Activated CD4-positive, alpha-beta memory T cell treated with anti-CD3 and anti-CD28 coated beads for 36 hours (primary cell): ENCODE measurements at regions of chr9 and their contacts with region 1.

Region 1: GRCh38 chr9:27333241-27334052 is 36.5 kb upstream of the EQTN start:
- DNase-seq: peak; percentile 53
- H3K4me3 Mint-ChIP-seq: no peak overlapping the region
- H3K27ac Mint-ChIP-seq: no peak overlapping the region
- H3K4me1 Mint-ChIP-seq: peaks cover 3% of the 10 kb centered on the region
- H3K27me3 Mint-ChIP-seq: peaks cover 2% of the 10 kb centered on the region

Region 2: DNA sequence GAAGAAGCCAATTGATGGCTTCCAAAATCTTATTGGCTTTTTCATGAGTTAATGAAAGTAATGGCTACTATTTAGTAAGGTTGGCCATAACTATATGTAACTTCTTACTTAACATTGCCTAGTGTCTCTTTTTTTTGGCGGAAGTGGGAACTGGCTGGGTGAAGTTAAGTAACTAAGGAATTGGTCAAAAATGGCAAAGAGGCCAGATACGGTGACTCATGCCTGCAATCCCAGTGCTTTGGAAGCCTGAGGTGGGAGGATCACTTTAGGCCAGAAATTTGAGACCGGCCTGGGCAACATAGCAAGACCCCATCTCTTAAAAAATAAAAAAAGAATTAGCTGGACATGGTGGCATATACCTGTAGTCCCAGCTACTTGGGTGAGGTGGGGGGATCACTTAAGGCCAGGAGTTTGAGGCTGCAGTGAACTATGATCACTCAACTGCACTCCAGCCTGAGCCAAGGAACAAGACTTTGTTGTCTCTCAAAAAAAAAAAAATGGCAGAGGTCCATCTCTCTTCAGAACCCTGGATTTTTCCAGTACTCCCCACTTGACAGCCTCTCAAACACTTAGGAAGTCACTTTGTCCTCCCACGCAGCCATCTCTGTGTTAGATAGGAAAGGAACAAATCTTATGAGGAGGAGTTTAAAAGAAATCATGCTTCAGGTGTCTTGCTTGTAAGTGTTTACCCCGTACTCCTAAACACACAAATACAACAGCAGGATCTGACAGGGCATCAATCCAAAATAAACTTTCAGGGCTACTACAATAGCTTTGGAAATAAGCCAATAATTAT is 148.7 kb before region 1 on chr9:
- CTCF ChIA-PET with region 1: no interaction called
- POLR2A ChIA-PET with region 1: no interaction called
- intact Hi-C with region 1: no loop called
- DNase-seq: no peak
- H3K4me3 Mint-ChIP-seq: no peak overlapping the region
- H3K27ac Mint-ChIP-seq: no peak overlapping the region
- H3K4me1 Mint-ChIP-seq: no peaks in the 10 kb centered on the region
- H3K27me3 Mint-ChIP-seq: peaks cover 3% of the 10 kb centered on the region

Region 3: DNA sequence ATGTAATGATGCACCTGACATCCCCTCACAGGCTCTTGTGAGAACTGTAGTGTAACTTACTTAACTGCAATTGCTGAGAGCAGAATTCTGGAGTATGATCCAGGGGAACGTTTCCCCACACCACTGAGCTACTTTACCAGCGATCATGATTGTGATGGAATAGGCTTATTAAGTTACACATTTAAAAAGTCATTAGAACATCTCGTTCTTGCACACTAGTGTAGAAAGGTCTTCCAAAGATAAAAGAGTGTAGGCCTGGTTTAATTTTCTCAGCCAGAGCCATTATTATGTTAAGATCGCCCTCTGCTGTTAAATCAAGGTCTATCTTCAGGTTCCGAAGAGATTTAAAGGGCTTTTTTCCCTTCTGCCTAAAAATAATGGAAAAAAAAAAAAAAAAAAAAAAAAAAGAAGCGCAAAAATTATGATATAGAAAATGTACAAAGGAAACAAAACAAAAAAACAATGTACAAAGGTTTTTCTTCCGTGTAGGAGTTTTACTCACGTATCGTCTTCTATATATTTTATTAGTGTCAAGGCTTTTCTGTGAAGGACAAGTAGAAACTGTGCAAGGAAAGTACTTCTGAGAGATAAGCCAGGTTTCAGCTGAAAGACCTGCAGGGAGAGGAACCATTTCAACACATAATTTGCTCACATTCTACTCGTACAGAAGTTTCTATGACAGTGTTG is 214.8 kb after region 1 on chr9:
- CTCF ChIA-PET with region 1: interaction called, 14 read pairs
- POLR2A ChIA-PET with region 1: no interaction called
- intact Hi-C with region 1: loop called (anchors 1 kb)
- DNase-seq: no peak
- H3K4me3 Mint-ChIP-seq: no peak overlapping the region
- H3K27ac Mint-ChIP-seq: no peak overlapping the region
- H3K4me1 Mint-ChIP-seq: no peaks in the 10 kb centered on the region
- H3K27me3 Mint-ChIP-seq: no peaks in the 10 kb centered on the region

Region 4: DNA sequence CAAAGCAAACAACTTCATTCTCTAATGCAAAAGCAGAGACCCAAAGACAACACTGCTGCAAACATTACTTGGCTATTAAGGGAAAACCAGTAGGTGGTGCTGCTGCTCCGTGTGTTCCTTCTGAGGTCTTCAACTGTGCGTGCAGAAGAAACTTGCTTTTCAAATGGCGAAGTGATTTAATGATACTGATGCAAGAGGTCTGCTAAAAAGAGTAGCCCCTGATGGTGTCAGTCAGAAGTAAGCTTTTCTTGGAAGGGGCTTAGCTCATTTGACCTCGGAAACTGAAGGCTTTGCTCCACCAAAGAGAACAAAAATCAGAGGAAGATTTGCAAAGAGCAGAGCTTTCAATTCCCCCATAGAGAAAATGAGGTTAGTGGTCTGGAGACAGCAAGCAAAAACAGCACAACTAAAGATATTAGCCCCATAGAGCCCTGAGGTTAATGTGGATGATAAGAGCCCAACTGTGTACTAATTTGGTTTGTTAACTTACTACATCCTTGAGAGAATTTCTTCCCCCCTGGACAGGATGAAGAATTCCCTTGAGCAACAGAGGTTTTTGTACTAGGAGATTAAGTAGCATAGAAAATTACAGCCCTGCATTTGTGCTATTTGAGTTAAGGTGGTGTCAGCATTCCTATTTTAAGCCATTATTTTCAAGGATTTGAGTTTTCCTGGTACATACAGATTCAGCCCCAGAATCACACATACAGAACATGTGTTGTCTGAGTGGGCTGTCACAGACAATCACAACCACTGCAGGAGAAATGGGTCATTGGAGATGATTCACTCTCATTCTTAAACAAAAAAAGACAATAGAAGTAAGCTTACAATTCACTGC is 393.0 kb after region 1 on chr9:
- CTCF ChIA-PET with region 1: interaction called, 4 read pairs
- POLR2A ChIA-PET with region 1: no interaction called
- intact Hi-C with region 1: loop called (anchors 10 kb)
- DNase-seq: peak; percentile 56
- H3K4me3 Mint-ChIP-seq: no peak overlapping the region
- H3K27ac Mint-ChIP-seq: no peak overlapping the region
- H3K4me1 Mint-ChIP-seq: no peaks in the 10 kb centered on the region
- H3K27me3 Mint-ChIP-seq: peaks cover 12% of the 10 kb centered on the region

Region 5: GRCh38 chr9:27888661-27889295 is 555.3 kb after region 1 on chr9:
- CTCF ChIA-PET with region 1: no interaction called
- POLR2A ChIA-PET with region 1: no interaction called
- intact Hi-C with region 1: loop called (anchors 5 kb)
- DNase-seq: peak; percentile 57
- H3K4me3 Mint-ChIP-seq: no peak overlapping the region
- H3K27ac Mint-ChIP-seq: no peak overlapping the region
- H3K4me1 Mint-ChIP-seq: no peaks in the 10 kb centered on the region
- H3K27me3 Mint-ChIP-seq: no peaks in the 10 kb centered on the region